SK-N-SH (cell line): ENCODE measurements at regions of chr15 and their contacts with region 1.

Region 1: DNA sequence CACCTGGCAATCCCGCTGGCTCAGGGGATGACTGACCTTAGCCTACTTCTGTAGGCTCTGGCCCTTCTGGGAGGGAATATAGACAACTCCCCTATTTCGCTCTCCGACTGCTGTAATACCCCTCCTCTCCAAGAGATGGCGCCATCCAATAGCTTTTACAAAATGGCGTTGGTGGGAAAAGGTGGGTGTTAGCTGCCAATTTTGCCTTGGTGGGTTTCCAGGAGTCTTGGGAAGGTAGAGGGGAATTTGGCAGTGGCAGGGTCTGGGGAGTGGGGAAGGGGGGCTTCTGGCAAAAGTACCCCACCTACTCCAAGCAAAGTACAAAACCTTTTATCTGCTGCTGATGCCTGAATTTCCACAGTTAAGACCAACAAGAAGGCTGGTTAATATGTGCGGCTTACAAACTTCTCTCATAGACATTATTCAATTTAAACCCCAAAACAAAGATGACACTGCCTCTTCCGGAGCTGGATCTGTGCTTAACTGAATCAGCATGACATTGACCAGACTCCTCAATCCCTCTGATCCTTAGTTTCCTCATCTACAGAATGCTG is 62.1 kb downstream of the RASGRF1 start:
- DNase-seq: peak; percentile 79
- H3K4me3 ChIP-seq: no peak overlapping the region; a peak in 1 of 4 replicates
- H3K27ac ChIP-seq: no peak overlapping the region
- H3K4me1 ChIP-seq: no peaks in the 10 kb centered on the region; a peak in 1 of 4 replicates
- H3K27me3 ChIP-seq: no peaks in the 10 kb centered on the region; the same call in 1 of the 2 replicates
- CTCF ChIP-seq: peak; percentile 88
- EP300 ChIP-seq: no peak
- RAD21 ChIP-seq: peak; percentile 94

Region 2: GRCh38 chr15:78739996-78740903 is 288.2 kb before region 1 on chr15:
- CTCF ChIA-PET with region 1: no interaction called
- POLR2A ChIA-PET with region 1: no interaction called
- DNase-seq: peak; percentile 52
- H3K4me3 ChIP-seq: no peak overlapping the region
- H3K27ac ChIP-seq: no peak overlapping the region
- H3K4me1 ChIP-seq: peaks cover 0 to 4% of the 10 kb centered on the region in 2 experiments; a peak in 1 of 4 replicates
- H3K27me3 ChIP-seq: no peaks in the 10 kb centered on the region
- CTCF ChIP-seq: peak; percentile 38
- EP300 ChIP-seq: no peak
- RAD21 ChIP-seq: peak; percentile 27

Region 3: DNA sequence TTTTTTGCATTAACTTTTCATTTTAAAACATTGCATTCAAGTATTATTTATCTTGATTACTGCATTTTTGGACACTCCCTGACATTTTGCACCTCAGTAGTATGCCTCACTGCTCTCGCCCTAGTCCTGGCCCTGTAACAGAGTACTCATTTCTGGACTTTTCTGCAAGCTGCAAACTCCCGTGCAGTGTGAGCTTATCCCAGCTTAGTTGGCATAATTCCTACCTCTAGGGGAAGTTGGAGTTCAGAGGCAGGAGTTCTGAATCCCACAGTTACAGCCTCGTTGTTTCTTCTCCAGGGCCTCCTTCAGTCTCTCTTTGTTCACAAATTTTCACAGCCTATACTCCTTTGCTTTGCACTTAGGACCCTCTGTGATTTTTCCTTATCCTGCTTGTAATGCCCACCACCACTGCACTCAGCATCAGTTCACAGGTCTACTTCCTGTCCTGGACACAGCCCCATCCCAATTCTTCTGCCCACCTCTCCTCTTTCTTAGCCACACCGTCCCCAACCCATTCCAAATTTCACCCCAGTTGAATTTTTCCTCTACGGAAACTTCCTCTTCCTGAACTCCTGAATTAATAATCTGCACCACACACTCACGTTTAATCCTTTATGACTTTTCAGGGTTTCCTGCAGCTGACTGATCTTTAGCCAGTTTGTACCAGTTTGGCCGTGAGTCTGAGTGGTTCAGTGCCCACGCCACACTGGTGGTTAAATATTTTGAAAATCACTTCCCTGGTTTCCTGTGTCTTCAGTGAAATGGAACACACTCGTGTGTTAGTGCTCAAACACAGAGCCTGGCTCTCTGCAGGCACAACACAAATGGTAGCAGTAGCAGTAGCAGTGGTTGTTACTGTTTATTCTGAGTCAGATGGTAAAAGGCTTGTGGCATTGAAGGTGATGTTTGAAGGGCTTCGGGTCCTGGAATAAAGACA is 77.3 kb before region 1 on chr15:
- CTCF ChIA-PET with region 1: no interaction called
- POLR2A ChIA-PET with region 1: no interaction called
- DNase-seq: no peak
- H3K4me3 ChIP-seq: no peak overlapping the region
- H3K27ac ChIP-seq: no peak overlapping the region
- H3K4me1 ChIP-seq: no peaks in the 10 kb centered on the region
- H3K27me3 ChIP-seq: no peaks in the 10 kb centered on the region
- CTCF ChIP-seq: no peak; the same call in 1 of the 2 replicates
- EP300 ChIP-seq: no peak
- RAD21 ChIP-seq: no peak

Region 4: GRCh38 chr15:78993931-78994530 is 34.5 kb before region 1 on chr15:
- CTCF ChIA-PET with region 1: interaction called, 11 read pairs
- POLR2A ChIA-PET with region 1: no interaction called
- DNase-seq: no peak
- H3K4me3 ChIP-seq: no peak overlapping the region
- H3K27ac ChIP-seq: no peak overlapping the region
- H3K4me1 ChIP-seq: peaks cover 2 to 24% of the 10 kb centered on the region in 2 experiments; a peak in 3 of 4 replicates
- H3K27me3 ChIP-seq: no peaks in the 10 kb centered on the region
- CTCF ChIP-seq: no peak
- EP300 ChIP-seq: no peak
- RAD21 ChIP-seq: no peak

Region 5: DNA sequence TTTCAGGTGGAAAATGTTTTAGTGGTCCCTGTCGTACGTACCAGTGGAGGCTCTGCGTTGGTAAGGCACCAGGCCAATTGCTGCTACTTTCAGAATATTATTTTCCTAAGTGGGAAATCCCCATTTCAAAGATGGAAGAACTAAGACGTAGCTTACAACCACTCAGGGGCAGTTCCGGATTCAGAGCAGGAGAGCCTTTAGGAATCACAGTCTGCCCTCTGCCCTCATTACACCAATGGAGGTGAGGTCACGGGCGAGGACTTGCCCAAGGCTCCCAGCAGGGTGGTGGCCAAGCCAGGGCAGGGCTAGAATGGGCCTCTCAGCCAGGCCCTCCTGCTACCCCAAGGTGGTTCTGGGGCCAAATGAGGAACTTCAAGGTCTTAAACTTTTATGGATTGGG is 10.5 kb before region 1 on chr15:
- CTCF ChIA-PET with region 1: interaction called, 10 read pairs
- POLR2A ChIA-PET with region 1: no interaction called
- DNase-seq: no peak
- H3K4me3 ChIP-seq: no peak overlapping the region
- H3K27ac ChIP-seq: no peak overlapping the region
- H3K4me1 ChIP-seq: no peaks in the 10 kb centered on the region
- H3K27me3 ChIP-seq: peaks cover 4% of the 10 kb centered on the region; the same call in 1 of the 2 replicates
- CTCF ChIP-seq: no peak
- EP300 ChIP-seq: no peak
- RAD21 ChIP-seq: no peak

Region 6: GRCh38 chr15:79048709-79049108 is 20.2 kb after region 1 on chr15:
- CTCF ChIA-PET with region 1: interaction called, 13 read pairs
- POLR2A ChIA-PET with region 1: no interaction called
- DNase-seq: no peak
- H3K4me3 ChIP-seq: no peak overlapping the region
- H3K27ac ChIP-seq: no peak overlapping the region
- H3K4me1 ChIP-seq: no peaks in the 10 kb centered on the region
- H3K27me3 ChIP-seq: peaks cover 5% of the 10 kb centered on the region; the same call in 1 of the 2 replicates
- CTCF ChIP-seq: no peak
- EP300 ChIP-seq: no peak
- RAD21 ChIP-seq: no peak

Region 7: DNA sequence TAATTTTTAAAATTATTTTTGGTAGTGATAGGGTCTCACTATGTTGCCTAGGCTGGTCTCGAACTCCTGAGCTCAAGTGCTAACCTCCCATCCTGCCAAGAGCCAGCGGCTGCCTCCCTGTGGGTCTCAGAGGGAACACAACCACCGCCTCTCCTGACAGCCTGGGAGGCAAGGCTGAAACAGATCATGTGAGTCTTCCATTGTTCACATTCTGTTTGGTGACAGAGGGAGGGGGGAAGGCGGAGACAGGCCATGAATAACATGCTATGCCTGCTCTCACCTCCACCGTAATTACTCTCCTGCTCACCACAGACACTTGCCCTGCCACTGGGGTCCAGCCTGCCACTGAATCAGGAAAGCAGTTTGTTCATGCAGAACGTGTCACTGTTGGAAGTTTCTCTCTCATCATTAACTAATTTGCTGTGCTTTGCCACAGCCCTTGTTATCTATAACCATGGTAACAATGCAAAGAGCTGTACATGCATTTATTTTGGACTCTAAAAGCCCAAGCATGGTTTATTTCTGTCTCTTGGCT is 140.5 kb after region 1 on chr15:
- CTCF ChIA-PET with region 1: interaction called, 629 read pairs
- POLR2A ChIA-PET with region 1: no interaction called
- DNase-seq: no peak
- H3K4me3 ChIP-seq: no peak overlapping the region
- H3K27ac ChIP-seq: no peak overlapping the region
- H3K4me1 ChIP-seq: peaks cover 0 to 31% of the 10 kb centered on the region in 2 experiments; a peak in 2 of 4 replicates
- H3K27me3 ChIP-seq: no peaks in the 10 kb centered on the region
- CTCF ChIP-seq: no peak
- EP300 ChIP-seq: no peak
- RAD21 ChIP-seq: no peak

Region 8: DNA sequence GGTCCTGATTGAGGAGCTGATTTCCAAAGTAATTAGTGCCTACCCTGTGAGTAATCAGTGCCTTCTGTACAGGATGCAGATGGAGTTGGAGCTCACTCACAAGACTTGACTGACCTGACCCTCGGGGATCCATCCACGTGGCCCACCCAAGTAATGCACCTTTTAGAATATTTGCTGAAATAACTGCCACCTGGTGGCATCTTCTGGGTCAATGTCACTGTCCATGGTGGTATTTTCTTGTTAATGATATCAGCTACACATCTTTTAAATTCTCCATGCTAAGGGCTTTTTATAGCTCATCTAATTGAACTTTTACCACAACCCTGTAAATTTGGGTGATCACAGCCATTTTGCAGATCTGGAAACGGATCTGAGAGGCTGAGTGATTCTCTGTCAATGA is 179.7 kb after region 1 on chr15:
- CTCF ChIA-PET with region 1: interaction called, 29 read pairs
- POLR2A ChIA-PET with region 1: no interaction called
- DNase-seq: no peak
- H3K4me3 ChIP-seq: no peak overlapping the region
- H3K27ac ChIP-seq: no peak overlapping the region
- H3K4me1 ChIP-seq: peaks cover 0 to 3% of the 10 kb centered on the region in 2 experiments; a peak in 1 of 4 replicates
- H3K27me3 ChIP-seq: no peaks in the 10 kb centered on the region
- CTCF ChIP-seq: no peak; the same call in 1 of the 2 replicates
- EP300 ChIP-seq: no peak
- RAD21 ChIP-seq: no peak